ENCODE measurements at regions of chr9 and their contacts with region 1.

Region 1: GRCh38 chr9:29548436-29548835 is 1975.2 kb upstream of the C9orf72 start:
- DNase-seq: no peak
- H3K4me3 ChIP-seq: no peak overlapping the region
- H3K27ac ChIP-seq: no peak overlapping the region
- H3K4me1 ChIP-seq: no peaks in the 10 kb centered on the region
- H3K27me3 ChIP-seq: no peaks in the 10 kb centered on the region
- CTCF ChIP-seq: no peak

Region 2: GRCh38 chr9:29393064-29393463 is 155.4 kb before region 1 on chr9:
- intact Hi-C with region 1: no loop called
- DNase-seq: no peak
- H3K4me3 ChIP-seq: no peak overlapping the region
- H3K27ac ChIP-seq: no peak overlapping the region
- H3K4me1 ChIP-seq: no peaks in the 10 kb centered on the region
- H3K27me3 ChIP-seq: no peaks in the 10 kb centered on the region
- CTCF ChIP-seq: no peak

Region 3: DNA sequence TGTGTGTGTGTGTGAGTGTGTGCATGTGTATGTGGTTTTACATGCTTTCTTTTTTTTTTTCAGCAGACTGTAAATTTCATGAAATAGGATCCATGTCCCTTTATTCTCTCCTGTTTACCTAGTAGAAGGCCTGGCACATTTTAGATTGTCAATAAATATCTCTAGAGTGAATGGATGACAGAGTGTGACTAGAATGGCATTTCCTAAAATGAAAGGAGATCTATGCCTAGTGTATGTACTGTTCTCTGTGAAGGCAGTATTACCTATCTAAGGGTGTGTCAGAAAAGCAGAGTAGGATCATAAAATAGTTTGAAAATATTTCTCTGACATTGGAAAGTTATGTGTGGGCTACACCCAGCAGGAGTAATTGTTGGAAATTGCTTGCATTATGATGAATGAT is 99.1 kb before region 1 on chr9:
- intact Hi-C with region 1: no loop called
- DNase-seq: no peak
- H3K4me3 ChIP-seq: no peak overlapping the region
- H3K27ac ChIP-seq: no peak overlapping the region
- H3K4me1 ChIP-seq: no peaks in the 10 kb centered on the region
- H3K27me3 ChIP-seq: no peaks in the 10 kb centered on the region
- CTCF ChIP-seq: no peak

Region 4: GRCh38 chr9:29609282-29609681 is 60.8 kb after region 1 on chr9:
- intact Hi-C with region 1: loop called (anchors 10 kb)
- DNase-seq: no peak
- H3K4me3 ChIP-seq: no peak overlapping the region
- H3K27ac ChIP-seq: no peak overlapping the region
- H3K4me1 ChIP-seq: no peaks in the 10 kb centered on the region
- H3K27me3 ChIP-seq: no peaks in the 10 kb centered on the region
- CTCF ChIP-seq: no peak